OCI-LY7 (cell line): ENCODE measurements at regions of chr17 and their contacts with region 1.

Region 1: DNA sequence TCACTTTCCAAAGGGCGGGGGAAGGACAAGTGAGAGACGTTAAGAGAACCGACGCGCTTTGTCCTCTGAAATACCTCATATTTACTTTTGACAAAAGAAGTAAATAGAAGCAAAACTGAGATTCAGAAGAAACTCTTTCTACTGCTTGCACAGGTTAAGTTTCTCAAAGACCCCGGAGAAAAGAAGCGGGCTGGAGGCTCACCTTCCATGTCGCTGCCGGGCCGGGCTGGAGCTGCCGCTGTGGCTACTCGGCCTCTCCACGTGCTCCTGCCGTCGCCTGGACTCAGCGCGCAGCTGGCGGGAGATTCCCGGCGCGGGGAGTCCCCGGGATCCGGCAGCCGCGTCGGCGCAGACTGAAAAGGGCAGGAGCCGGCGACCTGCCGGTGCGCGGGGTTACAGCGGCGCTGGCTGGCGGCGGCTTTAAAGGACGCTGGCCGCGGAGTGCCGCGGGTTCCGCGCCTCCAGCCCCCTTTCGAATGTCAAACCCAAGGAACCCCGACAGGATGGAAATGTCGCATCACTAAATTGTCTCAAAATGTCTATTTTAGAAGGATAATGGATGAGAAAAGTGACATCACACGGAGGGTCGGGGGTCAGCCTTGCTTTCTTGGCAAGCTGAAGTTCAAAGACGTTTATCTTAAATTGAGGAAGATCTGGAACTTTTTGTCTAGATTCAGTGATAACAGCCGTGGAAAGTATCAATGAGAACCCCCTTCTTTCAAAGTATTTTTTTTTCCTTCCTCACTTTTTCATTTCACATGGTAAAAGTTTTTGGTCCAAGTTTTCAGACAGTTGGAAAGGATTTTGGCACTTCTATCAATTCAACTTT is at the start of gene IKZF3:
- DNase-seq: peak; percentile 82
- H3K4me3 ChIP-seq: peak within 1 kb of the TSS; percentile 85
- H3K27ac ChIP-seq: peak within 1 kb of the TSS; percentile 89
- H3K4me1 ChIP-seq: peaks cover 50% of the 10 kb centered on the region
- CTCF ChIP-seq: peak; percentile 69
- total RNA-seq, gene IKZF3: 44.7 and 54.7 TPM in 2 replicates

Region 2: DNA sequence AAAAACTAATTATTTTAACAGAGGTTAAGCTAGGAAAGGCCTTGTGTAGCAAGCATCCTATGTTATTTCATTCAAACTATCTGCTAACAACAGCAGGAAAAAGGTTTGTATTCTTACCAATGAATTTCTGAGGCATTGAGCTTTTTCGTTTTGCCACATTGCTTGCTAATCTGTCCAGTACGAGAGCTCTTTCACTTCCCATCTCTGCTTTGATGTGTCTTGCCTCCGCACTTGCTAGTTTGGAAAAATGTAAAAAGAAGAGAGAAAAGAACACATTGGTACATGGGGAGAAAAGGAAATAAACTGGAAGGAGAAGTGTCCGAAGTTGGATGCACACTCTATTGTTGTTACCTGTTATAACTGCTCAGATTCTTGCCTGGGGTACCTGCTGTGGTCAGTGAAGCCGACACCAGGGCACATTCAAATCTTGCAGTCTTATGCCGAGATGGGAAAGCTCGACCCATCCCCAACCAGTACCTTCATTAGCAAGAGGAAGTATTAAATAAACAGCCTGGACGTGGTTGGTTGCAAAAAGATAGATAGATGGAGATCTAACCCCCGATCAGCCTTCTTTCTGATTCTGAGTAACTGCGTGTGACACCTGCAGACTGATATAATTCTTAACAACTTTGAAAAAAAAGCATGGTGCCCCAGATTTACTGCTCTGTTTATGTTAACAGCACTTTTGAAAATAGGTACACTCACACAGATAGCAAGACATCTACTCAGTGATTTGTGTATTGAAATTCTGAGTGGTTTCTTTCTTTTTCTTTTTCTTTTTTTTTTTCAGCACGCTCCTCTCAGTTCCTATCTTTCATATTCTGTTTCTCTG is 86.4 kb before region 1 on chr17:
- CTCF ChIA-PET with region 1: no interaction called
- POLR2A ChIA-PET with region 1: interaction called, 59 read pairs
- intact Hi-C with region 1: loop called (anchors 1 kb)
- DNase-seq: peak; percentile 63
- H3K4me3 ChIP-seq: peak overlapping the region; percentile 74
- H3K27ac ChIP-seq: peak overlapping the region; percentile 94
- H3K4me1 ChIP-seq: peaks cover 91% of the 10 kb centered on the region
- CTCF ChIP-seq: 0 out of 2 replicates have a peak, but pooled peaks have one; percentile 3

Region 3: GRCh38 chr17:39800540-39800939 is 63.6 kb before region 1 on chr17:
- CTCF ChIA-PET with region 1: no interaction called
- POLR2A ChIA-PET with region 1: interaction called, 56 read pairs
- intact Hi-C with region 1: no loop called
- DNase-seq: peak; percentile 88
- H3K4me3 ChIP-seq: peak overlapping the region; percentile 40
- H3K27ac ChIP-seq: peak overlapping the region; percentile 99
- H3K4me1 ChIP-seq: peaks cover 83% of the 10 kb centered on the region
- CTCF ChIP-seq: no peak

Region 4: GRCh38 chr17:39835038-39835786 is 28.9 kb before region 1 on chr17:
- CTCF ChIA-PET with region 1: no interaction called
- POLR2A ChIA-PET with region 1: no interaction called
- intact Hi-C with region 1: no loop called
- DNase-seq: no peak
- H3K4me3 ChIP-seq: no peak overlapping the region
- H3K27ac ChIP-seq: no peak overlapping the region
- H3K4me1 ChIP-seq: no peaks in the 10 kb centered on the region
- CTCF ChIP-seq: peak; percentile 34; the same call in 1 of the 2 replicates

Region 5: DNA sequence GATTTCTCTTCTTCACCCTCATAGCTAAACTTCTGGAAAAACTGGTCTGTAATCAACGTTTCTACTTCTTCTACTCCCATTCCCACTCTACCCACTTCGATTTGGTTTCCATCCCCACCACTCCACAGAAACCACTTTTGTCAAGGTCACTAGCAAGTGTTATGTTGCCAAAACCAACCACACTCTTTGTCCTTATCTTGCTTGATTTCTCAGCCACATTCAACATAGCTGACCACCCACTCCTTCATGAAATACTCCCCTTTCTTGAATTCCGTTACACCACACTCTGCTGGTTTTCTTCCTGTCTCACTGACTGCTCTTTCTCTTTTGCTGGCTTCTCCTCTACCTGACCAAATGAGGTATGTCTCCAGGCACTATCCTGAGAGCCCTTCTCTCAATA is 11.9 kb before region 1 on chr17:
- CTCF ChIA-PET with region 1: no interaction called
- POLR2A ChIA-PET with region 1: interaction called, 20 read pairs
- intact Hi-C with region 1: no loop called
- DNase-seq: no peak
- H3K4me3 ChIP-seq: no peak overlapping the region
- H3K27ac ChIP-seq: peak overlapping the region; percentile 54
- H3K4me1 ChIP-seq: peaks cover 58% of the 10 kb centered on the region
- CTCF ChIP-seq: no peak

Region 6: GRCh38 chr17:39980351-39981206 is 116.4 kb after region 1 on chr17 and contains the start of gene PSMD3:
- CTCF ChIA-PET with region 1: no interaction called
- POLR2A ChIA-PET with region 1: interaction called, 4 read pairs
- intact Hi-C with region 1: loop called (anchors 1 kb)
- DNase-seq: peak; percentile 100
- H3K4me3 ChIP-seq: peak within 1 kb of the TSS; percentile 96
- H3K27ac ChIP-seq: peak within 1 kb of the TSS; percentile 64
- H3K4me1 ChIP-seq: peaks cover 23% of the 10 kb centered on the region
- CTCF ChIP-seq: peak; percentile 79
- total RNA-seq, gene PSMD3: 149 and 150 TPM in 2 replicates